Naive thymus-derived CD4-positive, alpha-beta T cell (primary cell): ENCODE measurements at regions of chr1 and their contacts with region 1.

Region 1: GRCh38 chr1:116737020-116737854 is 17.0 kb upstream of the CD2 start:
- DNase-seq: peak; percentile 57 to 85 (median 80)
- ATAC-seq: peak; percentile 69
- H3K4me3 ChIP-seq: peak overlapping the region; percentile 28
- H3K4me3 Mint-ChIP-seq: peak overlapping the region; percentile 74 to 87 (median 82)
- H3K27ac ChIP-seq: peak overlapping the region; percentile 96
- H3K27ac Mint-ChIP-seq: peak overlapping the region; percentile 95 to 100 (median 98)
- H3K4me1 ChIP-seq: peaks cover 26 to 44% of the 10 kb centered on the region in 2 donors
- H3K4me1 Mint-ChIP-seq: peaks cover 39 to 54% (median 46%) of the 10 kb centered on the region in 7 donors
- H3K27me3 ChIP-seq: no peaks in the 10 kb centered on the region
- H3K27me3 Mint-ChIP-seq: no peaks in the 10 kb centered on the region

Region 2: DNA sequence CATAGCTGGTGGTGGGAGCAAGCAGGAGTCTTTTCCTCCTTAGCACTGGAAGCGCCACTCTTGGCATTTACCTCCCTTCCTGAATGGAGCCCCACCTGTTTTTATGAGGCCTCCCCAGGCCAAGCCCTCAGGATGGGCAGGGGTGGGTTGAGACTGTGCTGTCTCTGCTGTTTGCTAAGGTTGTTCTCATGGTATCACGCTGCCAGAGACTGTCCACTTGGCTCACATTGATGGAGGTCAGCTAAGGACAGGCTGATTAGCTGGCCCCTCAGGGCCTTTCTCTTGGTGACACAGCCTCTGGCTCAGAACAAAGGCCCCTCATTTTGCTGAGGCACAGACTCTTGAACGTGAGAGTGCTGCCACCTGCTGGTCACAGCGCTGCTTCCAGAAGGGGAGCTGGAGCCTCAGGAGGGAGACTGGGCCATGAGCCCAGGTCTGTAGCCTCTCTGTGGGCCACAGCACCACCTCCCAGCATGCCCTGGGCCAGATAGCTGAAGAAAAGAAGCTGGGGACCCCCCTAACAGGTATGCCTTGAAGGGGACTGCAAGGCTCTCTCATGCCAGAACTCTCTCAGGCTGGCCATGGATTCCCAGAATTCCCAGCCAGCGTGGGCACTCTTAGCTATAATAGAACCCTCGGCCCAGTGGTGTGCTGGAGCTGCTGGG is 252.0 kb before region 1 on chr1:
- CTCF ChIA-PET with region 1: no interaction called
- POLR2A ChIA-PET with region 1: no interaction called
- intact Hi-C with region 1: no loop called
- DNase-seq: peak; percentile 59 to 84 (median 76)
- ATAC-seq: peak; percentile 93
- H3K4me3 ChIP-seq: no peak overlapping the region
- H3K4me3 Mint-ChIP-seq: no peak overlapping the region
- H3K27ac ChIP-seq: no peak overlapping the region
- H3K27ac Mint-ChIP-seq: peak overlapping the region in 1 of 9 donors; percentile 21
- H3K4me1 ChIP-seq: no peaks in the 10 kb centered on the region
- H3K4me1 Mint-ChIP-seq: peaks cover 0 to 15% (median 0%) of the 10 kb centered on the region in 7 donors
- H3K27me3 ChIP-seq: no peaks in the 10 kb centered on the region
- H3K27me3 Mint-ChIP-seq: peaks cover 0 to 8% (median 0%) of the 10 kb centered on the region in 5 donors

Region 3: DNA sequence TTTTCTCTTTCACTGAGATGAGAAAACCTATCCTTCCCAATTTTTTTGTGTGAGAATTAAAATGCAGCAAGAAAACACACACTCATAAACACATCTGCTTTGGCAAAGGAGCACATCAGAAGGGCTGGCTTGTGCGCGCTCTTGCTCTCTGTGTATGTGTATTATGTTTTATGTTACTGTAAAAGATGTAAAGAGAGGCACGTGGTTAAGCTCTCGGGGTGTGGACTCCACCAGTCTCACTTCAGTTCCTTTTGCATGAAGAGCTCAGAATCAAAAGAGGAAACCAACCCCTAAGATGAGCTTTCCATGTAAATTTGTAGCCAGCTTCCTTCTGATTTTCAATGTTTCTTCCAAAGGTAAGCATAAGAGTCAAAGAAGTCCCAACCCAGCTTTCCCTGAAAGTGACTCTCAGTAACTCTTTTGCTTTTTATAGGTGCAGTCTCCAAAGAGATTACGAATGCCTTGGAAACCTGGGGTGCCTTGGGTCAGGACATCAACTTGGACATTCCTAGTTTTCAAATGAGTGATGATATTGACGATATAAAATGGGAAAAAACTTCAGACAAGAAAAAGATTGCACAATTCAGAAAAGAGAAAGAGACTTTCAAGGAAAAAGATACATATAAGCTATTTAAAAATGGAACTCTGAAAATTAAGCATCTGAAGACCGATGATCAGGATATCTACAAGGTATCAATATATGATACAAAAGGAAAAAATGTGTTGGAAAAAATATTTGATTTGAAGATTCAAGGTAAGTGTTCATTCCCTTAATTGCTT is 17.2 kb after region 1 on chr1 and contains the start of gene CD2:
- CTCF ChIA-PET with region 1: interaction called, 34 read pairs
- POLR2A ChIA-PET with region 1: interaction called, 163 read pairs
- intact Hi-C with region 1: loop called (anchors 1 kb)
- DNase-seq: peak in 7 of 9 donors; percentile 58 to 79 (median 71)
- ATAC-seq: peak; percentile 91
- H3K4me3 ChIP-seq: peak within 1 kb of the TSS; percentile 90
- H3K4me3 Mint-ChIP-seq: peak within 1 kb of the TSS; percentile 91 to 100 (median 98)
- H3K27ac ChIP-seq: peak within 1 kb of the TSS; percentile 89
- H3K27ac Mint-ChIP-seq: peak within 1 kb of the TSS; percentile 93 to 99 (median 97)
- H3K4me1 ChIP-seq: peaks cover 27 to 31% of the 10 kb centered on the region in 2 donors
- H3K4me1 Mint-ChIP-seq: peaks cover 25 to 47% (median 43%) of the 10 kb centered on the region in 7 donors
- H3K27me3 ChIP-seq: no peaks in the 10 kb centered on the region
- H3K27me3 Mint-ChIP-seq: no peaks in the 10 kb centered on the region
- total RNA-seq, gene CD2: 105 to 307 (median 174) TPM

Region 4: GRCh38 chr1:116817582-116818064 is 80.4 kb after region 1 on chr1:
- CTCF ChIA-PET with region 1: interaction called, 117 read pairs
- POLR2A ChIA-PET with region 1: interaction called, 67 read pairs
- intact Hi-C with region 1: loop called (anchors 1 kb)
- DNase-seq: peak; percentile 43 to 67 (median 63)
- ATAC-seq: peak; percentile 85
- H3K4me3 ChIP-seq: no peak overlapping the region
- H3K4me3 Mint-ChIP-seq: peak overlapping the region; percentile 4 to 75 (median 58)
- H3K27ac ChIP-seq: no peak overlapping the region
- H3K27ac Mint-ChIP-seq: peak overlapping the region in 8 of 9 donors; percentile 22 to 85 (median 82)
- H3K4me1 ChIP-seq: peaks cover 23 to 33% of the 10 kb centered on the region in 2 donors
- H3K4me1 Mint-ChIP-seq: peaks cover 20 to 58% (median 34%) of the 10 kb centered on the region in 7 donors
- H3K27me3 ChIP-seq: no peaks in the 10 kb centered on the region
- H3K27me3 Mint-ChIP-seq: no peaks in the 10 kb centered on the region

Region 5: GRCh38 chr1:116881879-116882520 is 144.8 kb after region 1 on chr1:
- CTCF ChIA-PET with region 1: interaction called, 10 read pairs
- POLR2A ChIA-PET with region 1: interaction called, 8 read pairs
- intact Hi-C with region 1: loop called (anchors 1 kb)
- DNase-seq: peak in 3 of 9 donors; percentile 14 to 40 (median 19)
- ATAC-seq: no peak
- H3K4me3 ChIP-seq: no peak overlapping the region
- H3K4me3 Mint-ChIP-seq: no peak overlapping the region
- H3K27ac ChIP-seq: no peak overlapping the region
- H3K27ac Mint-ChIP-seq: peak overlapping the region in 2 of 9 donors; percentile 44 to 60
- H3K4me1 ChIP-seq: peaks cover 11 to 20% of the 10 kb centered on the region in 2 donors
- H3K4me1 Mint-ChIP-seq: peaks cover 0 to 26% (median 0%) of the 10 kb centered on the region in 7 donors
- H3K27me3 ChIP-seq: no peaks in the 10 kb centered on the region
- H3K27me3 Mint-ChIP-seq: no peaks in the 10 kb centered on the region

Region 6: DNA sequence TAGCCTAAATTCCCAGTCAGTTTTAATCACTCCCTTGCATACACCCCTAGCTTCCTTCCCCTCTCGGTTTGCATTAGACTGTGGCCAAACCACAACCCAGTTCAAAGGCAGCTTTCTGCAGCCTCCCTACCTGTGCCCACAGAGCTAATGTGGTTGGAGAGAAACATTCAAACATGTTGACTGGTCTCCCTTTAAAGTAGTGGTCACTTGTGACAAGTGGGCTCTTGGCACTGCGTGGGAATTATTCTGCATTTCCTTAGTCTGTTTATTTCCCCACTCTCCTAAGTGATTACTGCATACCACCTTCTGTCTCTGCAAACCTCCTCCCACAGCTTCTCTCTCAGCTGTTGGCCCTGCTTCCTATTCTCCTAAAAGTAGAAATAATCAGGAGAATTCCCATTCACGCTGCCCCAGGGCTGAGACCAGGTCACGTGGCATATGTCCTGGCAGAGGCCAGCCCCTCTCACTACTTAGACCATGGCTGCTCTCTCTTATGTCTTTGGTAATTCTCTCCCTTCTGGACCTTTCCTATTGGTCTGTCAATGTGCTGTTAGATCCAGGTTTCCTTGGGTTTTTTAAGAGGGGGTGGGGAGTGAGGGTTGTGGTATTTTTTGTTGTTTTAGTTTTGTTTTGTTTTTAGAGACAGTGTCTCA is 225.9 kb after region 1 on chr1:
- CTCF ChIA-PET with region 1: no interaction called
- POLR2A ChIA-PET with region 1: no interaction called
- intact Hi-C with region 1: no loop called
- DNase-seq: no peak
- ATAC-seq: peak; percentile 34
- H3K4me3 ChIP-seq: no peak overlapping the region
- H3K4me3 Mint-ChIP-seq: no peak overlapping the region
- H3K27ac ChIP-seq: no peak overlapping the region
- H3K27ac Mint-ChIP-seq: no peak overlapping the region
- H3K4me1 ChIP-seq: peaks cover 10 to 13% of the 10 kb centered on the region in 2 donors
- H3K4me1 Mint-ChIP-seq: no peaks in the 10 kb centered on the region
- H3K27me3 ChIP-seq: no peaks in the 10 kb centered on the region
- H3K27me3 Mint-ChIP-seq: no peaks in the 10 kb centered on the region

Region 7: DNA sequence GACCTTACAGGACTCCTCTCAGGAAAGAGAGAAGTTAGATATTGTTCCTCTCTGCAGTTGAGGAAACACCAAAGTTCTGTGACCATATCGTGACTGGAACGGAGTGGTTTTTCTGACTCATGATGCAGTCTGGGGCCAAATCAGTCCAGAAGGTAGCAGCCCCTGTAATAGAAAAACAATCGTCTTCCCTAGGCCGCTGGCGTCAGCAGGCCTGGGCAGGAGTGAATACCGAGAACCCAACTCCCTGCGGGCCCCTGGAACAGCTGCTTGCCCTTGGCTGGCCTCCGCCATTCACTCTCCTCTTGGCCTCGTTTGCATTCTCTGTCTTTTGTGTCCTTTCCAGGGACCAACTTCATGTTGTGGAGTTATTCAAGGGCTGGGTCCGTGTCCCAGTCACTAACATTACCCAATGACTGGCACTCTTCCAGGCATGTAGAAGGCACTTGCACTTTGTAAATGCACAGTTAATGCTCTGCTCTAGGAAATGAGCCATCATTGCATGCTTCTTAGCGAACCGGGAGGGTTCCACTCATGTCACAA is 253.4 kb after region 1 on chr1:
- CTCF ChIA-PET with region 1: interaction called, 17 read pairs
- POLR2A ChIA-PET with region 1: interaction called, 3 read pairs
- intact Hi-C with region 1: loop called (anchors 1 to 2 kb)
- DNase-seq: no peak
- ATAC-seq: peak; percentile 15
- H3K4me3 ChIP-seq: no peak overlapping the region
- H3K4me3 Mint-ChIP-seq: no peak overlapping the region
- H3K27ac ChIP-seq: no peak overlapping the region
- H3K27ac Mint-ChIP-seq: no peak overlapping the region
- H3K4me1 ChIP-seq: peaks cover 6 to 48% of the 10 kb centered on the region in 2 donors
- H3K4me1 Mint-ChIP-seq: peaks cover 22 to 70% (median 67%) of the 10 kb centered on the region in 7 donors
- H3K27me3 ChIP-seq: no peaks in the 10 kb centered on the region
- H3K27me3 Mint-ChIP-seq: no peaks in the 10 kb centered on the region

Region 8: GRCh38 chr1:117128323-117129079 is 391.3 kb after region 1 on chr1:
- CTCF ChIA-PET with region 1: interaction called, 8 read pairs
- POLR2A ChIA-PET with region 1: no interaction called
- intact Hi-C with region 1: loop called in 1 of 2 experiments (anchors 1 kb)
- DNase-seq: peak in 5 of 9 donors; percentile 24 to 42 (median 31)
- ATAC-seq: peak; percentile 61
- H3K4me3 ChIP-seq: no peak overlapping the region
- H3K4me3 Mint-ChIP-seq: no peak overlapping the region
- H3K27ac ChIP-seq: no peak overlapping the region
- H3K27ac Mint-ChIP-seq: no peak overlapping the region
- H3K4me1 ChIP-seq: no peaks in the 10 kb centered on the region
- H3K4me1 Mint-ChIP-seq: peaks cover 0 to 5% (median 5%) of the 10 kb centered on the region in 7 donors
- H3K27me3 ChIP-seq: no peaks in the 10 kb centered on the region
- H3K27me3 Mint-ChIP-seq: peaks cover 5 to 30% (median 12%) of the 10 kb centered on the region in 5 donors